AG04450 (cell line): ENCODE measurements at regions of chr9 and their contacts with region 1.

Region 1: GRCh38 chr9:91949946-91950664 is at the start of gene ROR2:
- DNase-seq: no peak
- H3K4me3 ChIP-seq: peak within 1 kb of the TSS; percentile 71
- H3K27ac ChIP-seq: no peak within 1 kb of the TSS
- H3K27me3 ChIP-seq: peaks cover 20% of the 10 kb centered on the region
- CTCF ChIP-seq: peak; percentile 41
- polyA plus RNA-seq, gene ROR2: 9.7 and 12.3 TPM in 2 replicates

Region 2: DNA sequence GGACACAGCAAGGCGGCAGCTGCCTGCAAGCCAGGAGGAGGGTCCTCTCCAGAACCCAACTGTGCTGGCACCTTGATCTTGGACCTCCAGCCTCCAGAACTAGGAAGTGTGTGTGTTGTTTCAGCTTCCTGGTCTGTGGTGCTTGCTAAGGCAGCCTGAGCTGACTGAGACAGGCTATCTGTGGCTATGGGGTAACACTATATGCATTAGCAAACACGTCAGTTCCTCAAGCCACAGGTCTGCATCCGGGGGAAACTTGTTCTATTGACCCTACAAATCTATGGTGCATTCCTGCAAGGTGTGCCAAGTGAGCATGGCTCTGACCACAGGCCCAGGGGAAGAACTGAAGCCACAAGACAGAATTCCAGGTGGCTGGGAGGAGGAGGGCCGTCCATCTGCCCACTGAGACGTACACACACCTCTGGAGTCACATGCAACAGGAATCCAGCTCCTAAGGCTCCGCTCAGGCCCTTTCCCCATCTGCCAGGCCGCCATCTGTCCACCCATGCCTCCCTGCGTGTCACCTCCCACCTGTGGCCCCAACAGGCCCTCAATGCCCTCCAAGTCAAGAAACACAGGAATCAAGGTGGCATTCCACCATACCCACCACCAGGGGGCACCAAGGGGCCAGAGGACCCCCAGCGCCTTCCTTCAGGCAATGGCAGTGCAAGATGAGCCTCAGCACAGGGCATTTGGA is 174.9 kb before region 1 on chr9:
- CTCF ChIA-PET with region 1: interaction called, 24 read pairs
- POLR2A ChIA-PET with region 1: interaction called, 5 read pairs
- DNase-seq: peak; percentile 26
- H3K4me3 ChIP-seq: no peak overlapping the region
- H3K27ac ChIP-seq: no peak overlapping the region
- H3K27me3 ChIP-seq: no peaks in the 10 kb centered on the region
- CTCF ChIP-seq: peak; percentile 87

Region 3: GRCh38 chr9:91930475-91930874 is 19.6 kb before region 1 on chr9:
- CTCF ChIA-PET with region 1: interaction called, 20 read pairs
- POLR2A ChIA-PET with region 1: no interaction called
- DNase-seq: no peak
- H3K4me3 ChIP-seq: no peak overlapping the region
- H3K27ac ChIP-seq: no peak overlapping the region
- H3K27me3 ChIP-seq: peaks cover 3% of the 10 kb centered on the region
- CTCF ChIP-seq: no peak

Region 4: GRCh38 chr9:91972076-91972626 is 22.0 kb after region 1 on chr9:
- CTCF ChIA-PET with region 1: interaction called, 39 read pairs
- POLR2A ChIA-PET with region 1: no interaction called
- DNase-seq: no peak
- H3K4me3 ChIP-seq: no peak overlapping the region
- H3K27ac ChIP-seq: no peak overlapping the region
- H3K27me3 ChIP-seq: peaks cover 11% of the 10 kb centered on the region
- CTCF ChIP-seq: no peak

Region 5: GRCh38 chr9:92035687-92036410 is 85.7 kb after region 1 on chr9:
- CTCF ChIA-PET with region 1: interaction called, 8 read pairs
- POLR2A ChIA-PET with region 1: interaction called, 15 read pairs
- DNase-seq: peak; percentile 87
- H3K4me3 ChIP-seq: no peak overlapping the region
- H3K27ac ChIP-seq: peak overlapping the region; percentile 78
- H3K27me3 ChIP-seq: no peaks in the 10 kb centered on the region
- CTCF ChIP-seq: no peak

Region 6: DNA sequence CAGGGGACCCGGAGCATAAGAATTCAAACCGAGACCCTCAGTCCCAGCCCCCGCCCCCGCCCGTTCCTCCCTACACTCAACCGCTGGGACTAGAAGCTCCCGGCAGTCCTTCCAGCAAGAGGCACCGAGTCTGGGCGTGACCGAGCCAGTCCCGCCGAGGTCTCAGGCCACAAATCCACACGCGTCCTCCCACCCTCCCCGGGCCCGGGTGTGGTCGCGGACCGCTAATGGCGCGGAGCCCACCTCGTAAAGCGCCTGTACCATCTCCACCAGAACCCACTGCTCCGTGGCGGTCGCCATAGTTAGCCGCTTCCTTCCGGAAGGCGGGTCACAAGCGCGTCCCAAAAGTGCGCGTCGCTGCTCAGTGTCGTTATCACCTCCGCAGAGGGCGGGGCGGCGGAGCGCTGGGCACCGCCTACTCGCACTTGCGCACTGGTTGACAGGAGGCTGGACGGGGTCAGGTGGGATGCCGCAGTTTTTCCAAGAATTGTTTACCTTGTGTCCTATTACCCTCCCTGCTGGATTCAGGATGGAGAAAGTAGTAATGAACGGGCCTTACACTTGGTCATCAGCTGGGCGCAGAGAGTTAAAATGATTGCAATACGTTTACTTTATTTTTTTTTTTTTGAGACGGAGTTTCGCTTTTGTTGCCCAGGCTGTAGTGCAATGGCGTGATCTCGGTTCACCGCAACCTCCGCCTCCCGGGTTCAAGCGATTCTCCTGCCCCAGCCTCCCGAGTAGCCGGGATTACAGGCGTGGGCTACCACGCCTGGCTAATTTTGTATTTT is 165.2 kb after region 1 on chr9 and contains the start of gene SPTLC1:
- CTCF ChIA-PET with region 1: interaction called, 22 read pairs
- POLR2A ChIA-PET with region 1: interaction called, 4 read pairs
- DNase-seq: peak; percentile 72
- H3K4me3 ChIP-seq: peak within 1 kb of the TSS; percentile 95
- H3K27ac ChIP-seq: peak within 1 kb of the TSS; percentile 69
- H3K27me3 ChIP-seq: no peaks in the 10 kb centered on the region
- CTCF ChIP-seq: no peak
- polyA plus RNA-seq, gene SPTLC1: 117 and 140 TPM in 2 replicates